Mammary epithelial cell (primary cell): ENCODE measurements at regions of chr2 and their contacts with region 1.

Region 1: DNA sequence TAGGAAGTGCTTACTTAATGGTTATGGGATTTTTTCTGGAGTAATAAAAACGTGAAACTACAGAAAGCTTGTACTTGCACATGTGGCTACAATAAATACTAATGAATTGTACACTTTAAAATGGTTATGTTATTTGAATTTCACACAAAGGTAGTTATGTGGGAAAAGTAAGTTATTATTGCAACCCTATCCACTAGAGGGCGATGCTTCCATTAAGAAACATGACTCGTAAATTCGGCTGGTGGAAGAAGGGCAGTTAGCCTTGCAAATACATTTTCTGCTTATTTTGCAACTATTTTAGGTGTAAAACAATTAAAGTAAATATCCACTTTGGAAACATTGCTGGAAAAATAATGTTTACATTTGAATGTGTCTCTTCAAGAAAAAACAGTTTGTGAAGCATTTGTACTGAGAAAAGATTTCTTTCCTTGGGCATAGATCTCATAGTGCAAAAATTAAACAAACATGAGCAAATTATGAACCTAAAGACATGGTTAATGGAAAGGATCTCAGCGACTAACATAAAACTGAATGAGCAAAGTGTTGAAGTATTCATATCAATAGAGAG is 68.1 kb upstream of the CSRNP3 start:
- DNase-seq: peak; percentile 31
- H3K4me3 ChIP-seq: no peak overlapping the region
- H3K27ac ChIP-seq: no peak overlapping the region
- H3K4me1 ChIP-seq: no peaks in the 10 kb centered on the region
- H3K27me3 ChIP-seq: no peaks in the 10 kb centered on the region
- CTCF ChIP-seq: peak; percentile 70 to 79

Region 2: DNA sequence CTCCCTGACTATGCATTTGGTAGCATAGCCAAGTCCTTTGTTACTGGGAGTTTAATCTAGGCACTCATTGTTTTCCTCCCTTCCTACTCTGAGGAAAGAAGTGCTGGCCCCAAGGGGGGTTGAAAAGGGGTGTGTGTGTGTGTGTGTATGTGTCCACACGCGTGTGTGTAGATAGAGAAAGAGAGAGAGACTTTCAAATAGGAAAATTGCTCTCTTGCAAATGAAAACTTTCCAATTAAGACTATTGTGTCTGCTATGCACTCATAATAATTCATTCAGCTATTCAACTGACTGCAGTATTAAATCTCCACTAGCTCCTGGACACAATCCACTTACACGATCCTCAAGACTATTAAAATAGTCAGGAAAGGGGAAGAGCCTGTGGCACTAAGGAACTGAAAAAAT is 24.8 kb before region 1 on chr2:
- CTCF ChIA-PET with region 1: no interaction called
- dilution Hi-C with region 1: no loop called
- in situ Hi-C with region 1: no loop called
- intact Hi-C with region 1: no loop called
- DNase-seq: no peak
- H3K4me3 ChIP-seq: no peak overlapping the region
- H3K27ac ChIP-seq: no peak overlapping the region
- H3K4me1 ChIP-seq: no peaks in the 10 kb centered on the region
- H3K27me3 ChIP-seq: no peaks in the 10 kb centered on the region
- CTCF ChIP-seq: no peak

Region 3: GRCh38 chr2:165417009-165417408 is 15.6 kb after region 1 on chr2:
- CTCF ChIA-PET with region 1: no interaction called
- dilution Hi-C with region 1: no loop called
- in situ Hi-C with region 1: no loop called
- intact Hi-C with region 1: no loop called
- DNase-seq: no peak
- H3K4me3 ChIP-seq: no peak overlapping the region
- H3K27ac ChIP-seq: no peak overlapping the region
- H3K4me1 ChIP-seq: no peaks in the 10 kb centered on the region
- H3K27me3 ChIP-seq: peaks cover 6% of the 10 kb centered on the region
- CTCF ChIP-seq: no peak

Region 4: DNA sequence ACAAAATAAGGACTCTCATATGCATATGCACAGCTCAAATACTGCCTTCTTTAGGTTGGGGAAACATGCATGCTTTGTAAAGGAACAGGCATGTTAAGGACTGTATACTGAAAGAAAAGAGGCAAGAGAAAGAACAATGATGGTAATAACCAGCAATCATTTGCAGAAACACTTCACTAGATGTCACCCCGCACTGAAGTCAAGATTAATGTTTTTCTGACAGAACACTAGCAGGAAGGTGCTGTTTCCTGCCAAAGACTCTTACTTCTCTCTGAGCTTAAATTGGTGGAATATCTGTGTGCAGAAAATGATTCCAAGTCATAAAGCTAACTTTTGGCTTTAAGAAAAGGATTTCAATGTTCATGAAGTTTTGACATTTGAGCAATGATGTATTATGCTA is 48.8 kb after region 1 on chr2:
- CTCF ChIA-PET with region 1: no interaction called
- dilution Hi-C with region 1: no loop called
- in situ Hi-C with region 1: no loop called
- intact Hi-C with region 1: no loop called
- DNase-seq: no peak
- H3K4me3 ChIP-seq: no peak overlapping the region
- H3K27ac ChIP-seq: no peak overlapping the region
- H3K4me1 ChIP-seq: no peaks in the 10 kb centered on the region
- H3K27me3 ChIP-seq: no peaks in the 10 kb centered on the region
- CTCF ChIP-seq: no peak

Region 5: DNA sequence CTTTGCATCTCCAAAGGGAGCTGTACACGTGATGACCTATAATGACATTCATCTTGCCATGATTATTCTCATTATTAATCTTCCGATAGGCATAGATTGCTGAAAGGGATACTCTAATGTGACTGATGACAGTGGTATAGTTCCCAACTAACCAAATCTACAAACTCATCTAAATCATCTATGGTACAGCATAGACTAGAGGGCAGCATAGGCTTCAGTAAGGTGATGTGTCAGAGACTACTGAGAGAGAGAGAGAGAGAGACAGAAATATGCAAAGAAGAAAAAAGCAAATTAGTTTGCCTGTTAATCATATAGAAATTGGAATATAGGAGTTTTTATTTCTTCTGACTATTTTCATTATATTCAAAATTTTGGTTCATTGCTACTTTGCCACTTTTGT is 157.5 kb after region 1 on chr2:
- CTCF ChIA-PET with region 1: no interaction called
- dilution Hi-C with region 1: no loop called
- in situ Hi-C with region 1: no loop called
- intact Hi-C with region 1: loop called (anchors 10 kb)
- DNase-seq: no peak
- H3K4me3 ChIP-seq: no peak overlapping the region
- H3K27ac ChIP-seq: no peak overlapping the region
- H3K4me1 ChIP-seq: no peaks in the 10 kb centered on the region
- H3K27me3 ChIP-seq: no peaks in the 10 kb centered on the region
- CTCF ChIP-seq: peak in 1 of 2 donors; percentile 38

Region 6: DNA sequence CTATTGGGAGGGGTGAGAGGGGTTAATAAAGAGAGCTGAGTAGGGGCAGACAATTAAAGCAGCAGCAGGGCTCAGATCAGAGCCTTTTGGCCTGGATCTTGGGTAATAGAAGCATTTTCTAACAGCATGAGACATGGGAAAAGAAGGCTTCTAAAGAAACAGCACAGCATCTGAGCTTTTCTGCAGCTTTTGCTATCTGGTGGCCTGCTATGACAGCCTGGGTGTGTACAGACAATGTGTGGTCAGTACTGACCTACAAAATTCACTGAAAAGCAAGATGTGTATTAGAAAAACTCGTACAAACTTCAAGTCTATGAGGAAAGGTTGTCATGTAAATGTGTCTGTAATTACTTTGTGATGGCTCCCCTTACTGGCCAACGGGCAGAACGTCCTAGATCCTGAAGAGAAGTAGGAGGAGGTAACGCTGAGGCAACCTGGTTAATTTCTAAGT is 297.1 kb after region 1 on chr2:
- CTCF ChIA-PET with region 1: no interaction called
- dilution Hi-C with region 1: loop called (anchors 25 kb)
- in situ Hi-C with region 1: no loop called
- intact Hi-C with region 1: loop called (anchors 1 kb)
- DNase-seq: peak; percentile 47
- H3K4me3 ChIP-seq: no peak overlapping the region
- H3K27ac ChIP-seq: no peak overlapping the region
- H3K4me1 ChIP-seq: no peaks in the 10 kb centered on the region
- H3K27me3 ChIP-seq: no peaks in the 10 kb centered on the region
- CTCF ChIP-seq: peak; percentile 60 to 70

Region 7: GRCh38 chr2:165874445-165875039 is 473.2 kb after region 1 on chr2:
- CTCF ChIA-PET with region 1: no interaction called
- dilution Hi-C with region 1: no loop called
- in situ Hi-C with region 1: loop called (anchors 25 kb)
- intact Hi-C with region 1: loop called (anchors 1 kb)
- DNase-seq: peak; percentile 66
- H3K4me3 ChIP-seq: no peak overlapping the region
- H3K27ac ChIP-seq: no peak overlapping the region
- H3K4me1 ChIP-seq: peaks cover 7% of the 10 kb centered on the region
- H3K27me3 ChIP-seq: no peaks in the 10 kb centered on the region
- CTCF ChIP-seq: peak; percentile 69 to 79

Region 8: GRCh38 chr2:165953655-165954606 is 552.6 kb after region 1 on chr2 and contains the start of gene TTC21B:
- CTCF ChIA-PET with region 1: no interaction called
- dilution Hi-C with region 1: no loop called
- in situ Hi-C with region 1: no loop called
- intact Hi-C with region 1: loop called (anchors 5 kb)
- DNase-seq: peak; percentile 94
- H3K4me3 ChIP-seq: peak within 1 kb of the TSS; percentile 79 to 95 (median 84)
- H3K27ac ChIP-seq: peak within 1 kb of the TSS; percentile 85
- H3K4me1 ChIP-seq: peaks cover 5% of the 10 kb centered on the region
- H3K27me3 ChIP-seq: no peaks in the 10 kb centered on the region
- CTCF ChIP-seq: peak; percentile 68 to 71
- total RNA-seq, gene TTC21B: 9.3 to 20.7 TPM

Region 9: GRCh38 chr2:166134252-166135151 is 733.1 kb after region 1 on chr2:
- CTCF ChIA-PET with region 1: no interaction called
- dilution Hi-C with region 1: no loop called
- in situ Hi-C with region 1: no loop called
- intact Hi-C with region 1: loop called (anchors 5 kb)
- DNase-seq: peak; percentile 4
- H3K4me3 ChIP-seq: no peak overlapping the region
- H3K27ac ChIP-seq: no peak overlapping the region
- H3K4me1 ChIP-seq: no peaks in the 10 kb centered on the region
- H3K27me3 ChIP-seq: peaks cover 2% of the 10 kb centered on the region
- CTCF ChIP-seq: no peak